ENCODE measurements at regions of chr5 and their contacts with region 1.

Region 1: GRCh38 chr5:141825791-141826560 is 52.2 kb downstream of the PCDH1 start:
- DNase-seq: no peak
- ATAC-seq: no peak
- H3K4me3 ChIP-seq: no peak overlapping the region
- H3K27ac ChIP-seq: no peak overlapping the region
- H3K4me1 ChIP-seq: peaks cover 8% of the 10 kb centered on the region
- H3K27me3 ChIP-seq: no peaks in the 10 kb centered on the region

Region 2: DNA sequence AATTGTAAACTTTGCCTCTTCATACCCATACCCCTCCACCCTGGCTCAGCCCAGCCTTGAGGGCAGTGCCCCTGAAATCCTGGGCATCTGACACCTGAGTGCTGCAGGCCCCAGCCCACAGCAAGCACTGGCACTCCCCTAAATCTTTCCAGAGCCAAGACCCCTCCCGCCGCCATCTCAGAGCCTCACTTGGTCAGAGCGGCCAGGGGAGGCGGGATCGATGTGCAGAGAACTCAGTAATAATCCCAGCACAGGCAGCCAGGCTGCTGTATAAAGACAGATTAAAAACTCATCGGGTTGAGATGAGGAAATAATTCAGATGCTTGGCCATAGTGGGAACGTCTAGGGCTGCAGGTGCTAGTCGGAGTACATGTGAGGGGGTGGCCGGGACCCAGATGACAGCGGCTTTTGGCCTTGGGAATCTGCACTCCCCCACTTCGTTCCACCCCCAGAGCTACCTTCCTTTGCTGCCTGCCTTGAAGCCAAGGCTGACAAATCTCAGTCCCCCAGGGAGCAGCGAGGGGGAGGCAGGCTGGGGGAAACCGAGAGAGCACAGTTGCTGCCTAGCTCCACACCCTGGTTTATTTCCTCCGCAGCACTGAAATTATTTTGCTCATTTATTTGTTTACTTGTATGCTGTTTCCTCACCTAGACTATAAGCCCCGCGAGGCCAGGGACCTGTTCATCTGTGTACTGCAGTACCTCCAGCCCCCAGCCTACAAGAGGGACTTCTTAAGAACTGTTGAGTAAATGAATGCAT is 124.4 kb before region 1 on chr5:
- intact Hi-C with region 1: loop called in 1 of 4 experiments (anchors 5 kb)
- DNase-seq: no peak
- ATAC-seq: peak in 1 of 2 donors; percentile 26
- H3K4me3 ChIP-seq: no peak overlapping the region
- H3K27ac ChIP-seq: no peak overlapping the region
- H3K4me1 ChIP-seq: no peaks in the 10 kb centered on the region
- H3K27me3 ChIP-seq: no peaks in the 10 kb centered on the region

Region 3: DNA sequence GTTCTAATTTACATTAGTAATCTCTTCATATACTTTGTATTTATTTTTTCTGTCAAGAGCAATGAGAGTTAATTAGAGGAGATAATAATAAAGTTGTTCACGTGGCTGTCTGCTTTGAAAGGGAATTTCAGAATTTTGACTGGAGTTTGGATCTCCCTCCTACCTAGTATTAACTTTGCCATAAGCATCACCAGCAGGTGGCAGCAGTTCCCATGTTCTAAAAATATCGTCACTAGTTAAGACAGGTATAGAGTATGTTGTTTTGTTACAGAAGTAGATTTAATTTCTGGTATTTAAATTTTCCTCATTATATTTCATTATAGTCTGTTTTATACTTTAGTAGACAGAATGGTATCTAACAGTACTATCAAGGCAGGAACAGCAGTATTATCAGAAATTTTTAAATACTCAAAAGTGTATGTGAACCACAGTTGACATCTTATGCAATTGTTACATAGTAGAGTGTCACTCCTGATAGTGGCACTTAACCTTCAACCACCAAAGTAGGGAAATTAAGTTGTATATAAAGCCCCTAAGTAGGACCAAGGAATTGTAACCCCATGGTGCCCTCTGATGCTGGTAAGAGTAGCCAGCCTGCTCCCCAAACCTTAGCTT is 166.5 kb after region 1 on chr5:
- intact Hi-C with region 1: no loop called
- DNase-seq: peak; percentile 72 to 84 (median 73)
- ATAC-seq: peak; percentile 69 to 79
- H3K4me3 ChIP-seq: no peak overlapping the region
- H3K27ac ChIP-seq: no peak overlapping the region
- H3K4me1 ChIP-seq: no peaks in the 10 kb centered on the region
- H3K27me3 ChIP-seq: no peaks in the 10 kb centered on the region

Measured in right cardiac atrium (tissue), 5 donors.